ENCODE measurements at regions of chr5 and their contacts with region 1.

Region 1: GRCh38 chr5:137833463-137833862 is 34.2 kb upstream of the MYOT start:
- DNase-seq: no peak
- ATAC-seq: no peak

Region 2: GRCh38 chr5:137888857-137889759 is 55.6 kb after region 1 on chr5 and contains the start of gene PKD2L2:
- intact Hi-C with region 1: loop called (anchors 10 kb)
- DNase-seq: peak; percentile 95
- ATAC-seq: peak; percentile 96
- total RNA-seq, gene PKD2L2: 0.55 TPM

Measured in left ventricle myocardium superior (tissue), 1 donor.